Vagina (tissue), 2 donors: ENCODE measurements at regions of chr9 and their contacts with region 1.

Region 1: DNA sequence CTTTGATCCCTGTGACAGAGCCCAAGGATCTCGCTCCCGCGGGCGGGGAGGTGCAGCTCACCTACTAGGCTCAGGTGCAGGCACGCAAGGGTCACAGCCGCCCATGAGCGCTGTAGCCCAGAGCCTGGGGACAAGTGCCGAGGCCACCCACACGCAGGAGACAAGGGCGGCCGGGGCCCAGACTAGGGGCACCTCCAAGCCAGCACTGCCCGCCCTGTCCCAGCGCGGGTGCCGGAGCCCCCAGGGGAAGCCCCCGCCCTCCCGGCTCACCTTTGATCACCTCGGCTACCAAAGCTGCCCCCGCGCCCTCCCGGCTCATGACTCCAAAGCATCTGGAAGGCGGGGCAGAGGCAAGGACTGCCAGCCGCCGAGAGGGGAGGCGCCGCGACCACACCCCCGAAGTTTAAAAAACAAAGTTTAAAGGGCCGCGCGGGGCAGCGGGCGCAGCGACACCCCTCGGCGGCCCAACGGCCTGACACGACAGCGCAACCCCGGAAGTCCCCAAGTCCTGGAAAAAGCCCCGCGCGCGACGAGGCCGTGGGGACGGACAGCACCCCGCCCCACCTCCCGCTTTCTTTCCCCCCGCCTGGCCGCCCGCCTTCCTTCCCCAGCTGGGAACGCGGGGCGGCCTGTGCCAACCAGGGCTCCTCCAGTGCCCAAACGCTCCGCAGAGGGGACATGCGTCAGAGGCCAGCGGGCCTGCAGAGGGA is 53.0 kb downstream of the CDC14B start:
- DNase-seq: no peak
- H3K4me3 ChIP-seq: peak overlapping the region; percentile 83 to 88
- H3K27ac ChIP-seq: peak overlapping the region; percentile 96
- H3K4me1 ChIP-seq: peaks cover 11% of the 10 kb centered on the region
- H3K27me3 ChIP-seq: no peaks in the 10 kb centered on the region
- CTCF ChIP-seq: peak in 2 of 3 experiments; percentile 59 to 83
- POLR2A ChIP-seq: no peak

Region 2: GRCh38 chr9:96048104-96048955 is 518.3 kb before region 1 on chr9:
- intact Hi-C with region 1: no loop called
- DNase-seq: no peak
- H3K4me3 ChIP-seq: no peak overlapping the region
- H3K27ac ChIP-seq: no peak overlapping the region
- H3K4me1 ChIP-seq: peaks cover 19% of the 10 kb centered on the region
- H3K27me3 ChIP-seq: no peaks in the 10 kb centered on the region
- CTCF ChIP-seq: no peak
- POLR2A ChIP-seq: no peak

Region 3: GRCh38 chr9:96383165-96383942 is 183.3 kb before region 1 on chr9 and contains the start of gene SLC35D2:
- intact Hi-C with region 1: no loop called
- DNase-seq: no peak
- H3K4me3 ChIP-seq: peak within 1 kb of the TSS; percentile 82 to 88
- H3K27ac ChIP-seq: peak within 1 kb of the TSS; percentile 88
- H3K4me1 ChIP-seq: peaks cover 25% of the 10 kb centered on the region
- H3K27me3 ChIP-seq: no peaks in the 10 kb centered on the region
- CTCF ChIP-seq: no peak
- POLR2A ChIP-seq: no peak
- total RNA-seq, gene SLC35D2: 17.9 TPM

Region 4: DNA sequence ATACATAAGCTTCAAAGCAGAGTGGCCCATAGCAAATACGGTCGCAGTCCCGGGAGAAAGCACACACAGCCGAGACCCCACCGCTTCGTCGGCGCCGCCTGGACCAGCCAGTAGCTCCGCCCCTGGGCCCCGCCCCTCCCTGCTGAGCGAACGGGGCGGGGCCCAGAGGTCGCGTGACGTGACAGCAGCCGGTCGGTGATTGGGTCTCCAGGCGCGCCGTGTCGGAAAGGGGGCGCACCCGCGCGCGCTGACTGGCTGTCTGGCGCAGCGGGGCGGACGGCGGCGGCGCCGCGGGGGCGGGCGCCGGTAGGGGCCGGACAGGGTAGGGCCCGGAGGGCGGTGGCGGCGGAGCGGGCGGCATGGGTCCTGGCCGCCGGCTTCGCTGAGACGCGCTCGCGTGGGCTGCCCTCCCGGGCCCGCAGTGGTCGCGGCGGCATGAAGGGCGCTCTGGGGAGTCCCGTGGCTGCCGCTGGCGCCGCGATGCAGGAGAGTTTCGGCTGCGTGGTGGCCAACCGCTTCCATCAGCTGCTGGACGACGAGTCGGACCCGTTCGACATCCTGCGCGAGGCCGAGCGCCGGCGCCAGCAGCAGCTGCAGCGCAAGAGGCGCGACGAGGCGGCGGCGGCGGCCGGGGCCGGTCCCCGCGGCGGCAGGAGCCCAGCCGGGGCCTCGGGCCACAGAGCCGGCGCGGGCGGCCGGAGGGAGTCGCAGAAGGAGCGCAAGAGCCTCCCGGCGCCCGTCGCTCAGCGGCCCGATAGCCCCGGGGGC is 116.6 kb before region 1 on chr9 and contains the start of gene HABP4:
- intact Hi-C with region 1: loop called (anchors 10 kb)
- DNase-seq: peak; percentile 93 to 96
- H3K4me3 ChIP-seq: peak within 1 kb of the TSS; percentile 69 to 92
- H3K27ac ChIP-seq: peak within 1 kb of the TSS; percentile 82
- H3K4me1 ChIP-seq: peaks cover 18% of the 10 kb centered on the region
- H3K27me3 ChIP-seq: no peaks in the 10 kb centered on the region
- CTCF ChIP-seq: no peak
- POLR2A ChIP-seq: peak; percentile 36 to 95
- total RNA-seq, gene HABP4: 17.2 TPM

Region 5: GRCh38 chr9:96619491-96620154 is 53.0 kb after region 1 on chr9 and contains the start of gene CDC14B:
- intact Hi-C with region 1: loop called (anchors 10 kb)
- DNase-seq: peak in 1 of 2 donors; percentile 91
- H3K4me3 ChIP-seq: peak within 1 kb of the TSS; percentile 75 to 83
- H3K27ac ChIP-seq: peak within 1 kb of the TSS; percentile 75
- H3K4me1 ChIP-seq: peaks cover 17% of the 10 kb centered on the region
- H3K27me3 ChIP-seq: no peaks in the 10 kb centered on the region
- CTCF ChIP-seq: no peak
- POLR2A ChIP-seq: no peak
- total RNA-seq, gene CDC14B: 15.7 TPM